ENCODE measurements at regions of chr14 and their contacts with region 1.

Region 1: GRCh38 chr14:100192672-100193416 is 33.4 kb upstream of the DEGS2 start:
- DNase-seq: peak; percentile 99
- H3K4me3 ChIP-seq: peak overlapping the region; percentile 36 to 59 (median 43)
- H3K27ac ChIP-seq: peak overlapping the region; percentile 66
- H3K4me1 ChIP-seq: peaks cover 13% of the 10 kb centered on the region
- H3K27me3 ChIP-seq: no peaks in the 10 kb centered on the region
- CTCF ChIP-seq: peak; percentile 61

Region 2: GRCh38 chr14:98666545-98666944 is 1526.3 kb before region 1 on chr14:
- CTCF ChIA-PET with region 1: no interaction called
- dilution Hi-C with region 1: no loop called
- in situ Hi-C with region 1: no loop called
- intact Hi-C with region 1: no loop called
- DNase-seq: no peak
- H3K4me3 ChIP-seq: no peak overlapping the region
- H3K27ac ChIP-seq: no peak overlapping the region
- H3K4me1 ChIP-seq: no peaks in the 10 kb centered on the region
- H3K27me3 ChIP-seq: peaks cover 6% of the 10 kb centered on the region
- CTCF ChIP-seq: no peak

Region 3: DNA sequence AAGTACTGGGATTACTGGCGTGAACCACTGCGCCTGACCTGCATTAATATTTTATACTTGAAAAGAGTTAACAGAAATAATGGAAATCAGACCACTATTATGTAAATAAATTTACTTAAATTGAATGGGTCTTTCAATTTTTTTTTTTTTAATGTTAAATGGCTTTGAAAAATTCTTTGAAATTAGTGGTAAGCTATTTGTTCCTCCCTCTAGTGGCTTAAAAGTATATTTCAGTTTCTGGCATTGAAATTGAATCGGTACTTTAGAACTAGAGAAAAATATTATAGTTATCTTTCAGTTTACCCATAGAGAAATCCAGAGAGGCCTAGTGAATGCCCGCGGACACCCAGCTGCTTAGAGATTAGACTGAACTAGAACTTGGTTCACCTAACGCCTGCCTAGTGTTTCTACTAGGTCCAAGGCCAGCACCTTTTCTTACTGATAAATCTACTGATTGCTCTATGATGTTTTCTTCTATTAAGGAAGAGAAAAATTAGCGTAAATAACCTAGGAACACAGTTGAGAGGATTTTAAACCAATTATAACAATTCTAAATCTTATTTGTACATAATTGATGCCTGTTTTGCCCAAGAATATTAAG is 293.2 kb before region 1 on chr14:
- CTCF ChIA-PET with region 1: no interaction called
- dilution Hi-C with region 1: no loop called
- in situ Hi-C with region 1: no loop called
- intact Hi-C with region 1: loop called (anchors 5 kb)
- DNase-seq: no peak
- H3K4me3 ChIP-seq: no peak overlapping the region
- H3K27ac ChIP-seq: no peak overlapping the region
- H3K4me1 ChIP-seq: no peaks in the 10 kb centered on the region
- H3K27me3 ChIP-seq: no peaks in the 10 kb centered on the region
- CTCF ChIP-seq: peak; percentile 54 to 55

Region 4: DNA sequence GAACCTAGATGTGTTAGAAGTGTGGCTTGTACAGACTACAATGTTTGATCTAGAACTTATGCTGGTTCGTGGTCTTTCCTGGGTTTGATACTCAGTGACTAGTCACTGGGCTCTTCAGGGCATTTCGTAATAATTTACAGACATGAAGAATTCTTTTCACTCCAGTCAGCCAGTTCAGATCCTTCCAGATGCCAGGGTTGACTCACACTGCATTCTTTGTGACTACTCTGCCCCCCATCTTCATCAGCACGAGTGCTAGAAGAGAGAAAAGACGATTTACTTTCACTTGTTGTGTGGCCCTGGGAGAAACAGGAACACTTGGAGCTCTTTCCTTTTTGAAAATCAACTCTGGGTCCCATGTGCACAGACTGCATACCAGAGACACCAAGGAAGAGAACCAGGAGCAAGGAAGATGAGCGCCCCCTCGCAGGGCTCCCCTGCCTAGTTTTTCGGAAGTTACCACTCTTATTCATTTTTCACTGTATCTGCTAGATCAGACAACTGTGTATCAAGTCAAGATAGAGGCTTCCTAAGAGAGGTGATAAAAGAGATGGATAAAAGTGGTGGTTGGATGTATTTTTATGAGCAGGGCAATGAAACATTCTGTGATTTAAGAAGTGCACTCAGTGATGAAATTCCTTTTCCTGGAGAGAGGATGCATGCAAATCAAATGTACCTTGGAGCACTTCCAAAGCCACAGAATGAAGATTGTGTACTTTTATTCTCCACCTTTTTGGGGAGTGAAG is 161.1 kb before region 1 on chr14:
- CTCF ChIA-PET with region 1: no interaction called
- dilution Hi-C with region 1: no loop called
- in situ Hi-C with region 1: no loop called
- intact Hi-C with region 1: loop called (anchors 2 kb)
- DNase-seq: peak; percentile 97
- H3K4me3 ChIP-seq: peak overlapping the region; percentile 51 to 61 (median 55)
- H3K27ac ChIP-seq: peak overlapping the region; percentile 88
- H3K4me1 ChIP-seq: peaks cover 38% of the 10 kb centered on the region
- H3K27me3 ChIP-seq: no peaks in the 10 kb centered on the region
- CTCF ChIP-seq: peak; percentile 7 to 9

Region 5: GRCh38 chr14:100076133-100076532 is 116.7 kb before region 1 on chr14:
- CTCF ChIA-PET with region 1: interaction called, 5 read pairs
- dilution Hi-C with region 1: no loop called
- in situ Hi-C with region 1: loop called (anchors 25 kb)
- intact Hi-C with region 1: loop called (anchors 1 kb)
- DNase-seq: peak; percentile 56
- H3K4me3 ChIP-seq: no peak overlapping the region
- H3K27ac ChIP-seq: no peak overlapping the region
- H3K4me1 ChIP-seq: peaks cover 28% of the 10 kb centered on the region
- H3K27me3 ChIP-seq: no peaks in the 10 kb centered on the region
- CTCF ChIP-seq: peak; percentile 42 to 43

Region 6: DNA sequence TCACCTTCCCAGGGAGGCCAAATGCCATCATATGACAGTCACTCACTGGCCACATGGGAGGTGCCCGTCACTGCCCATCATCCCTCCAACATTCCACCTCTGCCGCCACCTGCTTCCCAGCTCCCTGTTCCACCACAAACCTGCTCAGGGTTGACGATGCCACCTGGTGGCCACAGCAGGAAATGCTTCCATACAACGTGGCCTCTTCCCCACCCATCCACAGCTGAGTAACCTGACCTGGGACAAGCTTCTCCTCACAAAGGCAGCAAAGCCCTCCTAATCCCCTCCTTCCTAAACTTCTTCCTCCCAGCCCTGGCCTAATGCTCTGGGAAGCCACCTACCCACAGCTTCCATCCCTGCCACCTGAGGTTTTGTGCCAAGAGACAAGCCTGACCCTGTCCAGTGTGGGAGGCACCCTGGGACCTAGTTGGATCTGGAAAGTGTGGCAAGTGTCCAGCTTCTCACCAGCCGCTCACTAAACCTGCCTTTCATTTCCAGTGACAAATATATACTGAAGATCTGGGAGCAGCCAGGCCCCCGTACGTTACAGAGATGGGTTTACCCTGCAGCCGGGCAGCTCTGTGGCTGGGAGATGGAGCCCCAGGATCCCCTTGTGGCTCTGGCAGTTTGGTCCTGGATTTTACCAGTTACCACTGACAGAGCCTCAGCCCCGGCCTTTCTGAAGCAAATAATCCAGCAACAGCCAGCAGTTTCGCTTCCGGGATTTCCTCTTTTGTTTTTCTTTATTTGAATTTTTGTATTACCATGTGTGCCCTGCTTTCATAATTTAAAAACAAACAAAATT is 37.6 kb before region 1 on chr14:
- CTCF ChIA-PET with region 1: interaction called, 5 read pairs
- dilution Hi-C with region 1: no loop called
- in situ Hi-C with region 1: no loop called
- intact Hi-C with region 1: loop called (anchors 2 kb)
- DNase-seq: no peak
- H3K4me3 ChIP-seq: no peak overlapping the region
- H3K27ac ChIP-seq: no peak overlapping the region
- H3K4me1 ChIP-seq: peaks cover 19% of the 10 kb centered on the region
- H3K27me3 ChIP-seq: peaks cover 5% of the 10 kb centered on the region
- CTCF ChIP-seq: peak; percentile 70 to 77

Region 7: GRCh38 chr14:100221533-100222223 is 28.8 kb after region 1 on chr14:
- CTCF ChIA-PET with region 1: no interaction called
- dilution Hi-C with region 1: no loop called
- in situ Hi-C with region 1: no loop called
- intact Hi-C with region 1: no loop called
- DNase-seq: peak; percentile 61
- H3K4me3 ChIP-seq: peak overlapping the region; percentile 33 to 55 (median 52)
- H3K27ac ChIP-seq: peak overlapping the region; percentile 10
- H3K4me1 ChIP-seq: peaks cover 6% of the 10 kb centered on the region
- H3K27me3 ChIP-seq: no peaks in the 10 kb centered on the region
- CTCF ChIP-seq: no peak

Region 8: GRCh38 chr14:100375963-100376735 is 183.3 kb after region 1 on chr14:
- CTCF ChIA-PET with region 1: no interaction called
- dilution Hi-C with region 1: no loop called
- in situ Hi-C with region 1: no loop called
- intact Hi-C with region 1: loop called (anchors 1 kb)
- DNase-seq: peak; percentile 96
- H3K4me3 ChIP-seq: peak within 1 kb of the TSS; percentile 90 to 94 (median 91)
- H3K27ac ChIP-seq: peak within 1 kb of the TSS; percentile 98
- H3K4me1 ChIP-seq: peaks cover 19% of the 10 kb centered on the region
- H3K27me3 ChIP-seq: no peaks in the 10 kb centered on the region
- CTCF ChIP-seq: no peak